Right ventricle myocardium superior (tissue), 1 donor: ENCODE measurements at regions of chr12 and their contacts with region 1.

Region 1: GRCh38 chr12:22544038-22544979 is at the start of gene C2CD5:
- DNase-seq: peak; percentile 97
- ATAC-seq: peak; percentile 98
- total RNA-seq, gene C2CD5: 19.5 TPM

Region 2: DNA sequence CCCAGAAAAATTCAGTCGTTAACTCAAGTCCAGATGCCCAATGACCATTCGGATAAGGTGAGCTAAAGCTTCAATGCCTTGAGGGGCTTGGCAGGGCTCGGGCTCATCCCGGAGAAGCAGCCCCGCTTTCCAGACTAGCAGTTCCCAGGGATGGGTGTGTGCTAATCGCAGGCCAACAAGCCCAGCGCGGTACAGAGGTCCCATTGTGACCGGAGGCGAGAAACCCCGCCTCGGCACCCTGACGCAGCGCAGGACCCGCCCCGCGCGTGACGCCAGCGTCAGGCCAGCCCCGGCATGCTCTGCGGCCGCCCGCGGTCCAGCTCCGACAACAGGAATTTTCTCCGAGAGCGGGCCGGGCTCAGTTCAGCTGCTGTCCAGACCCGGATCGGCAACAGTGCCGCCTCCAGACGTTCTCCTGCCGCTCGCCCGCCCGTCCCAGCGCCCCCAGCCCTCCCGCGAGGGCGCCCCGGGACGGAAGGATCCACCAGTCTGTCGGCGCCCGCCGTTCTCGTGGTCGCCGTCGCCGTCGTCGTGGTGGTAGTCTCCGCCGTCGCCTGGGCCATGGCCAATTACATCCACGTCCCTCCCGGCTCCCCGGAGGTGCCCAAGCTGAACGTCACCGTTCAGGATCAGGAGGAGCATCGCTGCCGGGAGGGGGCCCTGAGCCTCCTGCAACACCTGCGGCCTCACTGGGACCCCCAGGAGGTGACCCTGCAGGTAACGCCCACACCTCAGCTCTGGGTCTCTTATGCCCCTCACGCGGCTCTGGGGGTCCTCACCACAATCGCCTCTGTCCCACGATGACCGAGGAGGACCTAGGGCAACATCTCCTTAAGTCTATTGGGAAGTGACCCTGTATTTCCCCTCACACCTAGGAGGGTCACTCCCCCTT is 80.8 kb after region 1 on chr12 and contains the start of gene ETNK1:
- intact Hi-C with region 1: loop called (anchors 5 kb)
- DNase-seq: peak; percentile 97
- ATAC-seq: peak; percentile 100
- total RNA-seq, gene ETNK1: 14.4 TPM

Region 3: GRCh38 chr12:22746720-22747119 is 202.4 kb after region 1 on chr12:
- intact Hi-C with region 1: no loop called
- DNase-seq: no peak
- ATAC-seq: no peak